ENCODE measurements at regions of chr9 and their contacts with region 1.

Region 1: GRCh38 chr9:114505187-114506081 is at the start of gene WHRN:
- DNase-seq: no peak
- ATAC-seq: peak; percentile 85
- H3K4me3 ChIP-seq: peak within 1 kb of the TSS; percentile 64; the same call in 1 of the 2 replicates
- H3K27ac ChIP-seq: no peak within 1 kb of the TSS
- H3K4me1 ChIP-seq: 0 out of 2 replicates have a peak, but pooled peaks cover 3% of the 10 kb centered on the region
- H3K27me3 ChIP-seq: peaks cover 2 to 9% of the 10 kb centered on the region in 2 experiments
- CTCF ChIP-seq: no peak
- EP300 ChIP-seq: no peak
- POLR2A ChIP-seq: peak; percentile 59; the same call in 1 of the 2 replicates
- RAD21 ChIP-seq: no peak
- polyA plus RNA-seq, gene WHRN: 0.04 TPM in 1 of 2 experiments, not detected in the other

Region 2: DNA sequence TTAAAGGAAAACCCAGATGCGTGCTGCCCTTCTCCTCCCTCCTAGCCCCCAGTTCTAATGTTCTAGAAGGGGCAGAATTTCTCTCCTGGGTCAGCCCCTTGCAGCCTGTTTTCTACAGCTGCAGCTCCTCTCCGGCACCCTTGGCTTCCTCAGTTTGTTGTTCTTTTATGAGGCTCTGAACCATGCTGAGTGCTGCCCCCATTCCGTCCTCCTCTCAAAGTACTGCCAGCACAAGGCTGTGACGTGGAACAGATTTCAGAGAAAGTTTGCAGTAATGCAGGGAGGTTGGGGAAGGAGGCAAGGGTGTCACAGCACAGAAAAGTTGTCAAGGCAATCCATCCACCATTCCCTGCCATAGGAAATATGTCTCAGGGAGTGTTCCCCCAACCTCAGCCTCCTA is 978.6 kb before region 1 on chr9:
- CTCF ChIA-PET with region 1: no interaction called
- POLR2A ChIA-PET with region 1: no interaction called
- RAD21 ChIA-PET with region 1: no interaction called
- SMC1A ChIA-PET with region 1: no interaction called
- in situ Hi-C with region 1: no loop called
- intact Hi-C with region 1: no loop called
- DNase-seq: no peak
- ATAC-seq: no peak
- H3K4me3 ChIP-seq: no peak overlapping the region
- H3K27ac ChIP-seq: no peak overlapping the region
- H3K4me1 ChIP-seq: peaks cover 27% of the 10 kb centered on the region
- H3K27me3 ChIP-seq: no peaks in the 10 kb centered on the region
- CTCF ChIP-seq: no peak
- EP300 ChIP-seq: no peak
- POLR2A ChIP-seq: no peak
- RAD21 ChIP-seq: no peak

Region 3: DNA sequence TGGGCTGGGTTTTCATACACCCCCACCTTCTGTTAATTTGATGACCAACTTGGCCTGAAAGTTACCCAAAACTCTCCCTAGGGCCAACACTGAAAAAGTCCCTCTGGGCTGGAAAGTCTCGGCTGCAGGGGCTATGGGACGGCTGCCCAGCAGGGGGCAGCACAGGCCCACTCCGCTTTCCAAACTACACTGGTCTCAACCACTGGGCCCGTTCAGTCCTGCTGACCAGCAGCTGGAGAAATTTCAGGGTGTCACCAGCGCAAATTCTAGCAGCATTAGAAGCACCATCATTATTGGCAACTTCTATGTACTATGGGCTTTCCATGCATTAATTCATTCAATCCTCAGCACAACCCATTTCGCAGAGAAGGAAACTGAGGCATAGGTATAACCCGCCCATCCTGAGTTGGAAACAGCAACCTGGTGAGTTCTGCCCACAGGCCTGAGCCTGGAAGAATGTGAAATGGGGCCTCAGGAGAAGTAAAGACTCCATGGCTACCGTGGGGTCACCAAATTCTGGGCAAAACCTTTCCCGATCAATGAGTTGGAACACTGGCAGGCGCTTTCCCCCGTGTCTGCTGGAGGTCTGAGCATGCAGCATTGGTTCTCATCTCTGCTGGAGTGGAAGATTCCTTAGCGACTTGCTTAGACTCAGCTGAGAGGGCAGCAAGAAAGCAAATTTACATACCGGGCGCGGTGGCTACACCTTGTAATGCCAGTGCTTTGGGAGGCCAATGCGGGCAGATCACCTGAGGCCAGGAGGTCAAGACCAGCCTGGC is 166.1 kb before region 1 on chr9:
- CTCF ChIA-PET with region 1: interaction called, 13 read pairs
- POLR2A ChIA-PET with region 1: no interaction called
- RAD21 ChIA-PET with region 1: interaction called, 9 read pairs
- SMC1A ChIA-PET with region 1: interaction called, 5 read pairs
- in situ Hi-C with region 1: no loop called
- intact Hi-C with region 1: loop called (anchors 10 kb)
- DNase-seq: peak; percentile 46
- ATAC-seq: peak; percentile 96
- H3K4me3 ChIP-seq: no peak overlapping the region
- H3K27ac ChIP-seq: no peak overlapping the region
- H3K4me1 ChIP-seq: peaks cover 6% of the 10 kb centered on the region; the same call in 1 of the 2 replicates
- H3K27me3 ChIP-seq: no peaks in the 10 kb centered on the region
- CTCF ChIP-seq: peak; percentile 89 to 96 (median 90); a peak in 5 of 6 replicates
- EP300 ChIP-seq: 0 out of 4 replicates have a peak, but pooled peaks of 1 of the 2 experiments have one; percentile 35
- POLR2A ChIP-seq: no peak; the same call in 1 of the 2 replicates
- RAD21 ChIP-seq: peak; percentile 75

Region 4: DNA sequence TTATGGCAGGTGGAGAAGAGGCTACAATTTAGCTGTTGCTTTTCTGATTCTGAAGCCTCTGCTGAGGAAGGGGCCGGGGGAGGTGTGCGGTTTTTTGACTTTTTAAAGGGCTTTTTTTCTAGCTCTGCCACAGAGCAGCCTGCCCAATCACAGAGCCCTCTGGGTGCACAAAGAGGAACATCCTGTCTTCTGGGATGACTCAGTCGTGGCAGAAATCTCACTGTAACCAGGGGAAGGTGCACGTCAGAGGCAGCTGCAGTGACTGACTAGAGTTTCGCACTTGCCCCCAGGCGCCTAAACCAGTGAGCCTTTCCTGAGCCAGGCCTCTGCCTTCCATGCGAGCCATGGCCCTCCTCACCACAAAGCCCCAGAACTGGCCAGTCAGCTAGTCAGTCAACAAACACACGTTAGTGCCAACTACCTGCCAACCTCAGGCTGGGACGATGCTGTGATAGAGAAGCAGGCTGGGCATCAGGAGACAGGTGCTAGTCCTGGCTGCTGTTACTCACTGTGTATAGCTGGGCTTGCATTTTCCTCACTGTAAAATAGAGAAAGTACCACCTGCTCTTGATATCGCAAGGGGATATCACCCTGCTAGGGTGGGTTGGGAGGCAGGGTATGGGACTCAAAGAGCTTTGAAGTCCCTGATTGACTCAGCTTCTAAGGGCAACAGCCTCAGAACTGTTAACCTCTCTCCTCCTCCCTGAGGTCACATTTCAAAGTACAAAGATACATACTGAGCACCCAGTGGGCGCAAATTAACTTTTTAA is 119.8 kb before region 1 on chr9:
- CTCF ChIA-PET with region 1: interaction called, 6 read pairs
- POLR2A ChIA-PET with region 1: interaction called, 43 read pairs
- RAD21 ChIA-PET with region 1: interaction called, 8 read pairs
- SMC1A ChIA-PET with region 1: interaction called, 25 read pairs
- in situ Hi-C with region 1: no loop called
- intact Hi-C with region 1: no loop called
- DNase-seq: peak; percentile 97
- ATAC-seq: peak; percentile 74
- H3K4me3 ChIP-seq: peak overlapping the region; percentile 93
- H3K27ac ChIP-seq: peak overlapping the region; percentile 100
- H3K4me1 ChIP-seq: peaks cover 66% of the 10 kb centered on the region
- H3K27me3 ChIP-seq: no peaks in the 10 kb centered on the region
- CTCF ChIP-seq: no peak; a peak in 1 of 6 replicates
- EP300 ChIP-seq: peak; percentile 90 to 95
- POLR2A ChIP-seq: peak; percentile 90
- RAD21 ChIP-seq: no peak

Region 5: DNA sequence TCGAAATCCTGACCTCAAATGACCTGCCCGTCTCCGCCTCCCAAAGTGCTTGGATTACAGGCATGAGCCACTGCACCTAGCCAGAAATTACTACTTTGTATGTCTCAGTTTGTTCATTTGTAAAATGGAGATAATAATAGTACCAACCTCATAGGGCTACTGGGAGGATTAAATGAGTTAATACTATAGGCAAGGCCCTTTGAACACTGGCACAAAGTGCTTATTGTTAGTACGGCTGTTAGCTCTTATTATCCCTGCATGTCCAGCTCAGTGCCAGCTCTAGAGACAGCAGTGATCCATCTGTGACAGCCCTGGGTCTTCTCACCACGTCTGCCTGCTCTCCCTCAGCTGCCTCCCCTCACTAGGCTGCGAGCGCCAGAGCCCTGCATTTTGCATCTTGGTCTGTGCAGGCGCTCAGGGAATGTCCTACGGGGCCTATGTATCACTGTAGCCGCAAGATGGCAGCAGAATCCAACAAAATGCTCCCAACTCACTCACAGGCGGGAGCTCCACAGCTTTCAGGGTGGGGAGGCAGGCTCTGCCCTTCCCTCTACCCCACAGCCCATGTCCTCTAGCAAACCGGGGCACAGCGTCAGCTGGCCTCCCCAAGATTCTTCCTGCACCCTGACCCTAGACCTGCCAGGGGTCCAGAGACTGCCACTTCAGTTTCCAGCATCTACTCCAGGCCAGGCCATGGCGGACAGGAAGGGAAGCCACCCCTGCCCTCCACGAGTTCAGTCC is 100.0 kb before region 1 on chr9:
- CTCF ChIA-PET with region 1: interaction called, 109 read pairs
- POLR2A ChIA-PET with region 1: interaction called, 5 read pairs
- RAD21 ChIA-PET with region 1: interaction called, 43 read pairs
- SMC1A ChIA-PET with region 1: interaction called, 44 read pairs
- in situ Hi-C with region 1: no loop called
- intact Hi-C with region 1: loop called (anchors 5 kb)
- DNase-seq: no peak
- ATAC-seq: peak; percentile 98
- H3K4me3 ChIP-seq: no peak overlapping the region
- H3K27ac ChIP-seq: no peak overlapping the region
- H3K4me1 ChIP-seq: peaks cover 5% of the 10 kb centered on the region; the same call in 1 of the 2 replicates
- H3K27me3 ChIP-seq: no peaks in the 10 kb centered on the region; a peak in 1 of 4 replicates
- CTCF ChIP-seq: peak; percentile 76 to 93 (median 84)
- EP300 ChIP-seq: no peak
- POLR2A ChIP-seq: no peak
- RAD21 ChIP-seq: peak; percentile 91

Region 6: GRCh38 chr9:114452219-114453165 is 52.9 kb before region 1 on chr9:
- CTCF ChIA-PET with region 1: interaction called, 20 read pairs
- POLR2A ChIA-PET with region 1: interaction called, 4 read pairs
- RAD21 ChIA-PET with region 1: interaction called, 3 read pairs
- SMC1A ChIA-PET with region 1: interaction called, 16 read pairs
- in situ Hi-C with region 1: no loop called
- intact Hi-C with region 1: no loop called
- DNase-seq: no peak
- ATAC-seq: peak; percentile 49
- H3K4me3 ChIP-seq: no peak overlapping the region
- H3K27ac ChIP-seq: no peak overlapping the region
- H3K4me1 ChIP-seq: peaks cover 17% of the 10 kb centered on the region
- H3K27me3 ChIP-seq: no peaks in the 10 kb centered on the region; a peak in 1 of 4 replicates
- CTCF ChIP-seq: no peak
- EP300 ChIP-seq: no peak
- POLR2A ChIP-seq: no peak
- RAD21 ChIP-seq: no peak

Region 7: GRCh38 chr9:114518599-114519022 is 13.2 kb after region 1 on chr9:
- CTCF ChIA-PET with region 1: interaction called, 35 read pairs
- POLR2A ChIA-PET with region 1: interaction called, 7 read pairs
- RAD21 ChIA-PET with region 1: interaction called, 15 read pairs
- SMC1A ChIA-PET with region 1: interaction called, 14 read pairs
- in situ Hi-C with region 1: no loop called
- intact Hi-C with region 1: no loop called
- DNase-seq: peak; percentile 7
- ATAC-seq: peak; percentile 83
- H3K4me3 ChIP-seq: no peak overlapping the region
- H3K27ac ChIP-seq: peak overlapping the region; percentile 19; the same call in 1 of the 2 replicates
- H3K4me1 ChIP-seq: peaks cover 7% of the 10 kb centered on the region
- H3K27me3 ChIP-seq: peaks cover 0 to 3% of the 10 kb centered on the region in 2 experiments; a peak in 2 of 4 replicates
- CTCF ChIP-seq: no peak
- EP300 ChIP-seq: no peak
- POLR2A ChIP-seq: no peak
- RAD21 ChIP-seq: no peak

Region 8: DNA sequence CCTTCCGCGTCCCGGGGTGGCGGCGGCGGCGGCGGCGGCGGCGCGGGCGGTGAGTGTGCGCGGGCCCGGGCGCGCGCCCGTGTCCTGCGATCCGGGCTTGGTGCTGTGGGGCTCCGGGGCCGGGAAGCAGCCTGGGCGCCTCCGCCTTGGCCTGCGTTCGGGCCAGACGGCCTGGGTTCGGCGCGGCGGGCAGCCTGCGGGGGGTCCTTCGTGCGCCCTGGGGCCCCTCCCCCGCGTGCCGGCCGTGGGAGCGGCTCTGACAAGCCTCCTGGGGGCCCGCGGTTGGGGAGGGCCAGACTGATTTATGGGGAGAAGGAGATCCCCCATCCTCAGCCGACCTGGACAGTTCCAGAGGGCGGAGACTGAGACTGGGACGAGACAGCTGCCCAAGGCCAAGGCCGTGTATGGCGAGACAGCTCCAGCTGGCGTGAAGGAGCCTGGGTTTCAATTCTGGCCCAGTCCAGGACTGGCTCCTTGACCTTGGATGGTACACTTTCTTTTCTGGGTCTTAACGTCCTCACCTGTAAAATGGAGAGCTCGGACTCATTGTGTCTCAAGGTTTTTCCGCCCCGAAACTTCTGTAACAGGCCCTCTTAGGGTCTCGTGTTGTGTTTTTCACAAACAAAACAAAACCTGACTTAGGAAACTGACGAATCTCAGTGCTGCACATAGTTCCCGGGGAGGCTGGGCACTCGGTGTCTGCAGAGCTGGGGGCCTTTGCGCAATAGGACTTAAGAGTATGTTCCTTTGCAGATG is 106.3 kb after region 1 on chr9:
- CTCF ChIA-PET with region 1: interaction called, 7 read pairs
- POLR2A ChIA-PET with region 1: interaction called, 8 read pairs
- RAD21 ChIA-PET with region 1: interaction called, 6 read pairs
- SMC1A ChIA-PET with region 1: interaction called, 13 read pairs
- in situ Hi-C with region 1: no loop called
- intact Hi-C with region 1: no loop called
- DNase-seq: no peak
- ATAC-seq: peak; percentile 20
- H3K4me3 ChIP-seq: peak overlapping the region; percentile 95
- H3K27ac ChIP-seq: peak overlapping the region; percentile 98
- H3K4me1 ChIP-seq: peaks cover 63% of the 10 kb centered on the region
- H3K27me3 ChIP-seq: no peaks in the 10 kb centered on the region
- CTCF ChIP-seq: no peak
- EP300 ChIP-seq: no peak
- POLR2A ChIP-seq: peak; percentile 63
- RAD21 ChIP-seq: no peak

Region 9: DNA sequence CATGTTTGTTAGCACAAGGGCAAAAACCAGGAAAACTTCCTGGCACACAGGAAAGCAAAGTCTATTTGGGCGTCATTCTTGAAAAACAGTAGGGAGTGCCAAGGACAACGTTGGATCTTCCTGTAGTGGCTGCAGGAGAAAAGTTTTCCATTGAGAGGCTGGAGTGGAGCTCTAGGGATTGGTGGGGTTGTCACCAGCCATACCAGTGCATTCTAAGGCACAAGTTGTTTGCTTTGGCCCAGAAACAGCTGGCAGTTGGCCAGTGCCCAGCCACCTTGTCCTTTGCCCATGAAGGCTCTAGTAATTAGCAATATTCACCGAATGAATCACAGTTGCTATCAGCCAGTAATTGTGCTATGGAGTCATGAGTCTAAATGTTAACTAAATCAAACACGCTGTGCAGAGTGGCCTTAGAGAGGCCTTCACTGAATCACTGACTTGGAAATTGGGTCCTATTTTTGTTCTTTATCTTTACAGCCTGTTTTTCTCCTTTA is 274.0 kb after region 1 on chr9:
- CTCF ChIA-PET with region 1: no interaction called
- POLR2A ChIA-PET with region 1: no interaction called
- RAD21 ChIA-PET with region 1: no interaction called
- SMC1A ChIA-PET with region 1: no interaction called
- in situ Hi-C with region 1: no loop called
- intact Hi-C with region 1: no loop called
- DNase-seq: no peak
- ATAC-seq: no peak
- H3K4me3 ChIP-seq: no peak overlapping the region
- H3K27ac ChIP-seq: no peak overlapping the region
- H3K4me1 ChIP-seq: no peaks in the 10 kb centered on the region
- H3K27me3 ChIP-seq: peaks cover 0 to 2% of the 10 kb centered on the region in 2 experiments; a peak in 1 of 4 replicates
- CTCF ChIP-seq: no peak
- EP300 ChIP-seq: no peak
- POLR2A ChIP-seq: no peak
- RAD21 ChIP-seq: no peak

Measured in GM12878 (cell line).